Activated naive CD4-positive, alpha-beta T cell treated with anti-CD3 and anti-CD28 coated beads for 36 hours (primary cell): ENCODE measurements at regions of chr7 and their contacts with region 1.

Region 1: GRCh38 chr7:45923290-45923689 is 2.2 kb upstream of the IGFBP3 start:
- DNase-seq: peak; percentile 81
- H3K4me3 Mint-ChIP-seq: peak overlapping the region; percentile 44
- H3K27ac Mint-ChIP-seq: no peak overlapping the region
- H3K4me1 Mint-ChIP-seq: peaks cover 32% of the 10 kb centered on the region
- H3K27me3 Mint-ChIP-seq: peaks cover 39% of the 10 kb centered on the region

Region 2: DNA sequence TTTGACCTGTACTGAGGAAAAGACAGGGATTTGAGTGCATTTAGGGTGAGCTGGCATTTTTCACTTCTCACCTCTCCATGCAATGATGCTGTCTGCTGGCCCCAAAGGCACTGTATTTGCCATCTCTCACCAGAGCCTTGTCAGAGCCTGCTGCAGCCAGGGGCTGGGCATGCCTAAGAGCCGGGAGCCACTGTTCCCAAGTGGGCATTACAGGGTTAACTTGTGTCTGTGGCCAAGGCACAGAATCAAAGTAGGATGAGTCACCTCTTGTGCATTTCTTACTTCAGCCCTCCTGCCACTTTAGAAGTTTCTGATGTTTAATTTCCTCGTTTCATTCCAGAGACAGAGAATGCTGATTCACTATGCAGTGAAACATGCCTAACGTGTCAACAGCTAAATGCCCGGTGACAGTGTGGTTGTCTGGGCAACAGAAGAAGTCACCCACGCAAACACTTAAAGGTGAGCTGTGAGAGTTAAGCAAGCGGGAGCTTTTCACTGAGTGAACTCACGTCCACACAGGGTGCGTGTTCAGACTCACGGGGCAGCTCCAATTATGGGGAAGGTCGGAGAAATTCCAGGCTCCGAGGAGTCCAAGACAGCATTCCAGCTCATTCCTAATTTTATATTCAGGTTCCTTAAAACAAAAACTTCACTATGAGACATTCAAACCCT is 54.9 kb after region 1 on chr7:
- CTCF ChIA-PET with region 1: no interaction called
- intact Hi-C with region 1: loop called (anchors 1 kb)
- DNase-seq: peak; percentile 49
- H3K4me3 Mint-ChIP-seq: no peak overlapping the region
- H3K27ac Mint-ChIP-seq: no peak overlapping the region
- H3K4me1 Mint-ChIP-seq: peaks cover 12% of the 10 kb centered on the region
- H3K27me3 Mint-ChIP-seq: no peaks in the 10 kb centered on the region

Region 3: DNA sequence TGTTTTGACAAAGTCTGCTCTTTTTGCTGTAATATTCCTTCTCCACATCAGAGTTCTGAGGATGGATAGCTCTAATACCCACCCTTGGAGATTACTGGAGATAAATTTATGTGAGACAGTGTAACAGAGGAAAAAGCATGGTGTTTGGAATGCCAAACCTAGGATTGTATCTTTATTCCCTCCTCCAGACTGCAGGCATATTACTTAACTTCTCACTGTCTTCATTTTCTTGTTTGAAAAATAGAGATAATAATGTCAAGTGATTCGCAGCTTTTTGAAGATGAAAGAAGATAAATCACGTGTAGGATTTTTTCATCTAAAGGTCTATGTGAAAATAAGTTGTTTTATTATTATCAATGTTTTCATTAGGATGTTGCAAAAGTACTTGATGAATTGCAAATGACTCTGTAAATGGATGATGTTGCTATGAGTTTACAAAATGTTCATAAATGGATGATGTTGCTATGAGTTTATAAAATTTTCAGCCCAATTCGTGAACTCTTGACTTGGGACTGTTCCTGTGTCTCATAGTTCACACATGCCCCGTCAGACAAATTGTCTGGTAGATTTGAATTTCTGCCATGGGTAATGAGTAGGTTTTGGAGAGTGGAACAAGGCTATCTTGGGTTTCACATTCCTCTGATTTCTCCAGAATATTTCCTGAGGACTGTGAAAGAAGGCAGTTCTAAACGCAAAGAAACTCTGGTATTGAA is 110.9 kb after region 1 on chr7:
- CTCF ChIA-PET with region 1: no interaction called
- intact Hi-C with region 1: no loop called
- DNase-seq: no peak
- H3K4me3 Mint-ChIP-seq: no peak overlapping the region
- H3K27ac Mint-ChIP-seq: no peak overlapping the region
- H3K4me1 Mint-ChIP-seq: no peaks in the 10 kb centered on the region
- H3K27me3 Mint-ChIP-seq: no peaks in the 10 kb centered on the region

Region 4: GRCh38 chr7:46352004-46352954 is 429.0 kb after region 1 on chr7:
- CTCF ChIA-PET with region 1: interaction called, 6 read pairs
- intact Hi-C with region 1: loop called (anchors 1 kb)
- DNase-seq: peak; percentile 42
- H3K4me3 Mint-ChIP-seq: no peak overlapping the region
- H3K27ac Mint-ChIP-seq: no peak overlapping the region
- H3K4me1 Mint-ChIP-seq: no peaks in the 10 kb centered on the region
- H3K27me3 Mint-ChIP-seq: peaks cover 5% of the 10 kb centered on the region

Region 5: GRCh38 chr7:47179812-47180515 is 1256.7 kb after region 1 on chr7:
- CTCF ChIA-PET with region 1: interaction called, 4 read pairs
- intact Hi-C with region 1: loop called (anchors 2 kb)
- DNase-seq: peak; percentile 45
- H3K4me3 Mint-ChIP-seq: no peak overlapping the region
- H3K27ac Mint-ChIP-seq: no peak overlapping the region
- H3K4me1 Mint-ChIP-seq: no peaks in the 10 kb centered on the region
- H3K27me3 Mint-ChIP-seq: peaks cover 2% of the 10 kb centered on the region